ENCODE measurements at regions of chr1 and their contacts with region 1.

Region 1: DNA sequence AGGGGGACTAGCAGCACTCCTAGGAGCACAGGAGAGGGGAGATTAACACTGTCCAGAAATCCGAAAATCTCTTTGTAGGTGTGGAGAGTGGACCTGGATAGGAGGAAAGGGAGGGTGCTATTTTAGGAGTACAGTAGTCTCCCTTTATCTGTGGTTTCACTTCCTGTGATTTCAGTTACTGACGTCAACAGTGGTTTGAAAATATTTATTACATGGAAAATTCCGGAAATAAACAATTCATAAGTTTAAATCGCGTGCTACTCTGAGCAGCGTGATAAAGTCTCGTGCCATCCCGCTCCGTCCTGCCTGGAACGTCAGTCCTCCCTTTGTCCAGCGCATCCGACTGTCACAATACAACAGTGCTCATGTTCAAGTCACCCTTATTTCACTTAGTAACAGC is 6.6 kb upstream of the IL24 start:
- DNase-seq: peak; percentile 38 to 69 (median 46)
- H3K4me3 ChIP-seq: peak overlapping the region in 1 of 7 experiments; percentile 4
- H3K27ac ChIP-seq: no peak overlapping the region
- H3K4me1 ChIP-seq: peaks cover 0 to 9% (median 2%) of the 10 kb centered on the region in 4 experiments
- H3K27me3 ChIP-seq: no peaks in the 10 kb centered on the region

Region 2: GRCh38 chr1:206905280-206906164 is 14.8 kb after region 1 on chr1:
- CTCF ChIA-PET with region 1: interaction called, 12 read pairs
- POLR2A ChIA-PET with region 1: no interaction called
- DNase-seq: peak in 2 of 3 donors; percentile 39 to 46
- H3K4me3 ChIP-seq: peak overlapping the region in 1 of 7 experiments; percentile 24
- H3K27ac ChIP-seq: no peak overlapping the region
- H3K4me1 ChIP-seq: peaks cover 4 to 29% (median 24%) of the 10 kb centered on the region in 4 experiments
- H3K27me3 ChIP-seq: peaks cover 0 to 9% (median 0%) of the 10 kb centered on the region in 5 experiments